Activated CD4-positive, alpha-beta T cell treated with anti-CD3 and anti-CD28 coated beads, Interleukin-2, amount 10 ng/mL, durations not matched to agents 7 days and 5 days (primary cell): ENCODE measurements at regions of chr3 and their contacts with region 1.

Region 1: DNA sequence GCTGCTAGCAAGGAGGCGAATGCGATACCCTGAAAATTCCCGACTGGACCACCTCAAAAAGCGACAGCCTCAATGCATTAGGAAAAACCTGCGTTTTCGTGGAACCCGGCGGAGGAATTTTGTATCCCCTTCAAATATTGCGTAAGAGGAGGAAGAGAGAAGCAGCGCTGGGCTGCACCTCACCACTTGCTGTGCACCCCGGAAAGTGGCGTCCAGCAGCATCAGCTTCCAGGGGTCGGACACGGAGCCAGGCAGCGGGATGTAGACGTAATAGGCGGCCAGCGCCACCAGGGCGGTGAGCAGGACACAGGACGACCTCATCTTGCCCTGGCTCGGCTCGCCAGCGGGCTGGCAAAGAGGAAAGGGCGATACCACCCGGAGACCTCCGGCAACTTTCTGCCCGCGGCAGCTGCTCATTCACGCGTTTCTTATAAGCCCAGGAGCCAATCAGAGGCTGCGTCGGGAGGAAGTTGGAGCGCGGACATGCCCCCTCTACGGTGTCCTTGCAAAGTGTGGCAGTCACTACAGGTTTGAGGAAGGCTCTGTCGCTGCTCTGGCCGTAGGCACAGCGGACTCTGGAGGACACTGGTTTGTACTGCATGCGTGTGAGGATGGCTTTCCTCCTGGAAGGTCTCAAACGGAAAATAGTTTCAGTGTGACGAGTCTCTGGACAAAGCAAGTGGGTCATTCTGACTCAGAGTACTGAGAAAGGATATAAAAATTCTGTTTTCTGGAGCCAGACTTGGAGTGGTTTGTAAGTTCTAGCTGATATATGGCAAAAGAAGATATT is at the start of gene NCEH1:
- DNase-seq: peak; percentile 83
- H3K4me3 Mint-ChIP-seq: peak within 1 kb of the TSS; percentile 83
- H3K27ac Mint-ChIP-seq: peak within 1 kb of the TSS; percentile 82
- H3K4me1 Mint-ChIP-seq: peaks cover 26% of the 10 kb centered on the region
- H3K27me3 Mint-ChIP-seq: peaks cover 6% of the 10 kb centered on the region
- total RNA-seq, gene NCEH1: 5.0 to 6.8 TPM

Region 2: GRCh38 chr3:172750368-172751174 is 39.7 kb after region 1 on chr3 and contains the start of gene ECT2:
- CTCF ChIA-PET with region 1: interaction called, 11 read pairs
- POLR2A ChIA-PET with region 1: interaction called, 3 read pairs
- DNase-seq: peak; percentile 99
- H3K4me3 Mint-ChIP-seq: peak within 1 kb of the TSS; percentile 95
- H3K27ac Mint-ChIP-seq: peak within 1 kb of the TSS; percentile 99
- H3K4me1 Mint-ChIP-seq: peaks cover 43% of the 10 kb centered on the region
- H3K27me3 Mint-ChIP-seq: peaks cover 9% of the 10 kb centered on the region
- total RNA-seq, gene ECT2: 56.0 to 60.2 TPM